Activated CD4-positive, alpha-beta T cell treated with anti-CD3 and anti-CD28 coated beads, Interleukin-2, amount 10 ng/mL, durations not matched to agents 24 days and 14 days (primary cell): ENCODE measurements at regions of chr6 and their contacts with region 1.

Region 1: DNA sequence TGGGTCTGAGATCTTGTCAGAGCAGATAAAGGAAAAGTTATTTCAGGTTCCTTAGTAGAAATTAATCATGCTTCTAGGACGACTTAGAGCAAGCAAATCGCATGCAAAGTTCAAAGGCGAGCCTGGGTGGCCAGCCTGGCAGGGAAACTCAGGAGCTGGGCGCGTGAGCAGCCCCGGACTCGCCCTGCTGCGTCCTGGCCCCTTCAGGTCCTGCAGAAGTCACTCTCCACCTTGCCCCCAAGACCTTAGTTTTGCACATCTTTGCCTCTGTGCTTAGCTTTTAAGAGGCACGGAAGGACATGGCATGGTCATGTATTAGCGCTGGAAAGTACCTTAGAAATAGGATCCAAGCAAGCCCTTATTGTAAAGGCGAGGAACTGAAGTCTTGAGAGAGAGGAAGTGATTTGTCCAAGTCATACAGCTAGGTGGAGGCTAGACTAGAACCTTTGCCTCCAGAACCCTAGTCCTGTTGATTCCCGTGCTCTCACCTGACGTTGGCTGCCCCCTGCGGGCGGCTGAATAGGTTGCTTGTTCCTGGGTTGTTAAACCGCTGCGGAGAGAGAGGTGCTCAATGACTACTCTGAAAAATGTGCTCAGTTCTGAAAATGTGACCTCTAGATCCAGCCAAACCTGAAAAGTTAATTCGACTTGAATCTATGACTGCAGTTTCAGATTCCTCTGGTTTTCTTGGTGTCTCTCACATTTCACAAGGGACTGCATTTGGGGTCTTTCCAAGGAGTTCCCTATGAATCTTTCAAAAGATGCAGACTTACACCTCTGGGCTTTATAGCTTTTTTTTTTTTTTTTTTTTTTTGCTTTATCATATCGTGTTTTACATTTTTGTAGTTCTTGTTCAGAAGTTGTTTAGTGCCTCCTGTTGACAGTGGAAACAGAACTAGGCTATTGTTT is 2.7 kb downstream of the MYB start:
- DNase-seq: peak; percentile 94
- H3K4me3 Mint-ChIP-seq: peak overlapping the region; percentile 92
- H3K27ac Mint-ChIP-seq: peak overlapping the region; percentile 89
- H3K4me1 Mint-ChIP-seq: peaks cover 35% of the 10 kb centered on the region
- H3K27me3 Mint-ChIP-seq: no peaks in the 10 kb centered on the region

Region 2: GRCh38 chr6:134979142-134979541 is 204.6 kb before region 1 on chr6:
- intact Hi-C with region 1: loop called (anchors 1 kb)
- DNase-seq: peak; percentile 81
- H3K4me3 Mint-ChIP-seq: peak overlapping the region; percentile 14
- H3K27ac Mint-ChIP-seq: peak overlapping the region; percentile 71
- H3K4me1 Mint-ChIP-seq: peaks cover 39% of the 10 kb centered on the region
- H3K27me3 Mint-ChIP-seq: no peaks in the 10 kb centered on the region

Region 3: DNA sequence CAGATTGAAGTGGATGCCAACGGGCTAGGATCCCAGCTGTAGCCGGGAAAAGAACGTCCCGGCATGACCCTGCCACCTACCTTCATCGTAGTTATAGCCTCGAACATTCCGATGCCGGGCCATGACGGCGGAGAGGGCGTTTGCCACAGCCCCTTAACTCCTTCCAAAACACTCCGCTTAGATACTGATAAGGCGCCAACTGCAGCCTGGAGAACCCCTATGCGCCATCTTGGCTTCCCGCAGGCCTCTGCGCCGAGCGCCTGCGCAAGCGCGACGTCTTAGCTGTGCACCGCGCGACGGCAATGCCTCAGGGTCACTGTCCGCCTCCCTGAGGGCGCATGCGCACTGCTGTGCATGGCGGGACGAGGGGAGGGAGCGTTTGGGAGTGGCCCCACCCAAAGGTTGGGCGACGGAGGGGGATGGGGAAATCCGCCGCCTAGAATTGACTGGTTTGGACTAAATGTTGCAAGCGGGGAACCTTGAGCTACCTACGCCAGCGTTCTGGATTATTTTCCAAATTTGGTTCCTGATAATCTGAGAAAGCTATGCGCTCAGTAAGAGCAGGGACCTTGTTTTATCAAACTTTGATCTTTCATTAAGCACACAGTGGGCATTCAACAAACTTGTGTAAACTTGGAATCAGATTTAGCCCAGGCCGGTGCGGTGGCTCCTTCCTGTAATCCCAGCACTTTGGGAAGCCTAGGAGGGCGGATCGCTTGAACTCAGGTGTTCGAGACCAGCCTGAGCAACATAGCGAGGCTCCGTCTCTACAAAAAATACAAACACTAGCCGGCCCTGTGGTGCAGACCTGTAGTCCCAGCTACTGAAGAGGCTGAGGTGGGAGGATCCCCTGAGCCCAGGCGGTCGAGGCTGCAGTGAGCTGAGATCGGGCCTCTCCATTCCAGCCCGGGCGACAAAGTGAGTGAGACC is 129.0 kb before region 1 on chr6 and contains the start of gene HBS1L:
- intact Hi-C with region 1: loop called (anchors 1 kb)
- DNase-seq: peak; percentile 99
- H3K4me3 Mint-ChIP-seq: peak within 1 kb of the TSS; percentile 92
- H3K27ac Mint-ChIP-seq: peak within 1 kb of the TSS; percentile 94
- H3K4me1 Mint-ChIP-seq: peaks cover 32% of the 10 kb centered on the region
- H3K27me3 Mint-ChIP-seq: no peaks in the 10 kb centered on the region
- total RNA-seq, gene HBS1L: 94.4 and 104 TPM in 2 replicates

Region 4: DNA sequence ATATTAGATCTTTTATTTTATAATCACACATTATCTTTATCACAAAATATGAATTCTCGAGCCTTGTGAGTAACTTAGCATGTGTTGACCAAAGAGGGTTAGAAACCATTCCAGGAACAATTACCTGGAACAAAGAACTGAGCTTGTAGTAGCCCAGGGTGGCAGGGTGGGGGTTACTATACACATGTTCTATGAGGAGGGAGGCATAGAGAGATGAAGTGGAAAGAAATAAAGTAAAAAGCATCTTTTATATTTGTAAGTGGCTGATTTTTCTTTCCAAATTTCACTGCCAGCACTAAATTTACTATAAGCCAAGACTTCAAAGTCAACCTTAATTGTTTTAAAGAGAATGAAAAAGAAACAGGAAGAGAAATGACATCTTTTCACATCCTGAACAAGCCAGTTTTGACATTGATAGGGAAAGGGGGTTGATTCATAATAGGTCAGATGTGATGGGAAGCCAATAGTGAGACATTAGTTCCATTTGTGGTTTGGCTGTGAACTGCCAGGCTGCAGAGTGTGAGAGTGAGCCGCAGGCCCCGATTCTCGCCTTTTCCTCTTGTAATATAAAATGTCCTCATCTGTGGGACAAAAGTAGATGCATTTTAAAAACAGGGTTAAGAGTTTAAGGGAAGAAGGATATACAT is 55.4 kb before region 1 on chr6:
- intact Hi-C with region 1: loop called (anchors 1 kb)
- DNase-seq: peak; percentile 86
- H3K4me3 Mint-ChIP-seq: peak overlapping the region; percentile 73
- H3K27ac Mint-ChIP-seq: peak overlapping the region; percentile 91
- H3K4me1 Mint-ChIP-seq: peaks cover 42% of the 10 kb centered on the region
- H3K27me3 Mint-ChIP-seq: no peaks in the 10 kb centered on the region

Region 5: GRCh38 chr6:135162678-135163439 is 20.9 kb before region 1 on chr6:
- intact Hi-C with region 1: loop called (anchors 1 kb)
- DNase-seq: peak; percentile 75
- H3K4me3 Mint-ChIP-seq: peak overlapping the region; percentile 61
- H3K27ac Mint-ChIP-seq: peak overlapping the region; percentile 93
- H3K4me1 Mint-ChIP-seq: peaks cover 47% of the 10 kb centered on the region
- H3K27me3 Mint-ChIP-seq: no peaks in the 10 kb centered on the region

Region 6: GRCh38 chr6:135195522-135195921 is 11.7 kb after region 1 on chr6:
- intact Hi-C with region 1: loop called (anchors 1 kb)
- DNase-seq: no peak
- H3K4me3 Mint-ChIP-seq: no peak overlapping the region
- H3K27ac Mint-ChIP-seq: peak overlapping the region; percentile 62
- H3K4me1 Mint-ChIP-seq: peaks cover 35% of the 10 kb centered on the region
- H3K27me3 Mint-ChIP-seq: no peaks in the 10 kb centered on the region

Region 7: DNA sequence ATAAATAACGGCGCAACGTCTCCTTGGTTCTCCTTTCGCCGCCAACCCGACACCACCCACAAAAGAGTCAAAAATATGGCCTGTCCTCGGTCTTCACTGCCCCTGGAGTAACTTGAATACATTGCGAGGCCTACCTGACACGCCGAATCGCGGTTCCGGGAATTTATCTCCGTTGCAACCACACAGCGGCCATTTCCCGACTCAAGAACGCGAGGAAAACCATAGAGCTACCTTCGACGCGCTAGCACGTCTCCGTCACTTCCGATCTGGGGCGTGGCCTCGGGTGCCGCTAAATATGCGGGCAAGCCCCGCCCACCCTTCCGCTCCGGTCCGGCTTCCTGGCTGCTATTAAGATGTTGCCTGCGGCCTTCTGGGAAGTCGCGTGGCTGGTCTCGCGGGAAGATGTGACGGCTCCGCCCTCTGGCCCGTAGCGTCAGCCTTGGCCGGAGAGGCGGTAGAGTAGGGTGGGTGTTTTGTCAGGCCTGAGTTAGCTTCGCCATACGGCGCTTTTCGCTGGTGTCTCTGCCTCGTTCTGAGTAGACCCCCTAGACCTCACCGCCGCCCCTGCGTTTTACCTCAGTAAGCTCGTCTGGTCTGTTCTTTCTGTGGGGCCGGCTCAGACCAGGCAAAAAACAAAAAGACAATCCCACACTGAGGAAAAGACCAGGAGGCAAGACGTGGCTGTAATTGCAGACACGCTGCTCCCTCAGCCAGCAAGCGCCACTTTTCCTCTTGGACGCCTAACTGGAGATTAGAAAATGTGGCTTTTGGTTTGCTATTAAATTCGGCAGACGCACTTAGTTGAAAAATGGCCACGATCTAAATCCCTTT is 1106.0 kb after region 1 on chr6 and contains the start of gene BCLAF1:
- intact Hi-C with region 1: loop called (anchors 5 kb)
- DNase-seq: peak; percentile 100
- H3K4me3 Mint-ChIP-seq: peak within 1 kb of the TSS; percentile 92
- H3K27ac Mint-ChIP-seq: peak within 1 kb of the TSS; percentile 100
- H3K4me1 Mint-ChIP-seq: peaks cover 41% of the 10 kb centered on the region
- H3K27me3 Mint-ChIP-seq: peaks cover 2% of the 10 kb centered on the region
- total RNA-seq, gene BCLAF1: 267 TPM in 2 replicates